Endothelial cell of umbilical vein (primary cell): ENCODE measurements at regions of chr1 and their contacts with region 1.

Region 1: GRCh38 chr1:156383023-156383422 is 14.0 kb downstream of the RHBG start:
- DNase-seq: peak; percentile 55
- H3K4me3 ChIP-seq: no peak overlapping the region
- H3K27ac ChIP-seq: no peak overlapping the region
- H3K4me1 ChIP-seq: peaks cover 3% of the 10 kb centered on the region
- H3K27me3 ChIP-seq: peaks cover 9 to 11% of the 10 kb centered on the region in 2 experiments
- CTCF ChIP-seq: peak; percentile 79 to 94
- POLR2A ChIP-seq: no peak

Region 2: GRCh38 chr1:156076501-156077429 is 306.3 kb before region 1 on chr1:
- CTCF ChIA-PET with region 1: no interaction called
- POLR2A ChIA-PET with region 1: no interaction called
- dilution Hi-C with region 1: no loop called
- intact Hi-C with region 1: no loop called
- DNase-seq: no peak
- H3K4me3 ChIP-seq: no peak overlapping the region
- H3K27ac ChIP-seq: no peak overlapping the region
- H3K4me1 ChIP-seq: peaks cover 14% of the 10 kb centered on the region
- H3K27me3 ChIP-seq: no peaks in the 10 kb centered on the region
- CTCF ChIP-seq: no peak
- POLR2A ChIP-seq: no peak

Region 3: DNA sequence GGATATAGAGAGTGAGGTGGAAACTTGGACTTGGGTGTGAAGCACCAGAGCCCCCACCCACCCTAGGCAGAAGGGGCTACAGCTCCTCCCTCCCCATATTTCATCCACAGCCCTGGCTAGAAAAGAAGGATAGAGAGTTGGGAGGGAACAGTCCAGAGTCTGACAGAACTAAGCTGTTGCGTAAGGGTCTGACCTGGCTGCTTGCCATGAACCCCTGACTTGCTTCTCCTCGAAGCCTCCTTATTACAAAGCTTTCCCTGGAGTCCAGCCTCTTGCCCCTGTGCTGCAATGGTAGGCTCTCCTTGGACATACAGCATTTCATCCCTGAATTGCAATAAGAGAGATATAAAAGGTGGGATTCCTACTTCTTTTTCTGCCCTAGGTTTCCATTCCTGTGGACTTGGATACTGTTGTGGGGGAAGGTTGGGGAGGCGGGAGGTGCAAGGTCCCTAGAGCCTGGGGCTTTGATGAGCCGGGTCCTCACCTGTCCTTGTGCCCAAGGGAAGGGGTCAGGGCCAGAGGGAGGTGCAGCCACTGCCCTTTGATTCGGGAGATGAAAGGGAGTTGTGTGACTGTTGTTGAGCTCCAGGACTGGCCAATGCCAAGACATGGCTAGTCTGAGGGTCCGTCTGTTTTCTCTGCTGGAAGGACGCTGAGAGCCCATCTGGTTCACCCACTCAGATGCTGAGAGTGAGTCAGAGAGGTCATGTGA is 11.3 kb before region 1 on chr1:
- CTCF ChIA-PET with region 1: interaction called, 96 read pairs
- POLR2A ChIA-PET with region 1: no interaction called
- dilution Hi-C with region 1: no loop called
- intact Hi-C with region 1: no loop called
- DNase-seq: no peak
- H3K4me3 ChIP-seq: no peak overlapping the region
- H3K27ac ChIP-seq: no peak overlapping the region
- H3K4me1 ChIP-seq: peaks cover 6% of the 10 kb centered on the region
- H3K27me3 ChIP-seq: peaks cover 23 to 34% of the 10 kb centered on the region in 2 experiments
- CTCF ChIP-seq: no peak
- POLR2A ChIP-seq: no peak

Region 4: DNA sequence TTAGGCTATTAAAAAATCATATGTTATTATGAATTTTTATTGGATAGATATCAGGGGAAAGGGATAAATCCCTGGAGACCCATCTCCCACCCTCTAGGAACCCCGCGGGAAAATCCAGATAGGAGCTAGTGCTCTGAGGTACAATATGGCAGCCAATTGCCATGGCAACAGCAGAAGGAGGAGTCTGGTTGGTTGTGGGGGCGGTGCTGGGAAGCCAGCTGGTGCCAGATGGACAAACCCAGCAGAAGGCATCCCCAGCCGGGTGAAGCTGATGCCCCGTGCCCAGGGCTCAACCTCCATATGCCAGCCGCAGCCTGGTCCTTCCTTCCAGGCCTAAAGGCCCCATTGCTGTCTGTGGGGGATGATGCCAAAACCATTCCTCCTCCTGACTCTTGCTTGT is 24.3 kb after region 1 on chr1:
- CTCF ChIA-PET with region 1: interaction called, 78 read pairs
- POLR2A ChIA-PET with region 1: no interaction called
- dilution Hi-C with region 1: no loop called
- intact Hi-C with region 1: no loop called
- DNase-seq: no peak
- H3K4me3 ChIP-seq: no peak overlapping the region
- H3K27ac ChIP-seq: no peak overlapping the region
- H3K4me1 ChIP-seq: no peaks in the 10 kb centered on the region
- H3K27me3 ChIP-seq: peaks cover 19 to 34% of the 10 kb centered on the region in 2 experiments
- CTCF ChIP-seq: no peak
- POLR2A ChIP-seq: no peak

Region 5: DNA sequence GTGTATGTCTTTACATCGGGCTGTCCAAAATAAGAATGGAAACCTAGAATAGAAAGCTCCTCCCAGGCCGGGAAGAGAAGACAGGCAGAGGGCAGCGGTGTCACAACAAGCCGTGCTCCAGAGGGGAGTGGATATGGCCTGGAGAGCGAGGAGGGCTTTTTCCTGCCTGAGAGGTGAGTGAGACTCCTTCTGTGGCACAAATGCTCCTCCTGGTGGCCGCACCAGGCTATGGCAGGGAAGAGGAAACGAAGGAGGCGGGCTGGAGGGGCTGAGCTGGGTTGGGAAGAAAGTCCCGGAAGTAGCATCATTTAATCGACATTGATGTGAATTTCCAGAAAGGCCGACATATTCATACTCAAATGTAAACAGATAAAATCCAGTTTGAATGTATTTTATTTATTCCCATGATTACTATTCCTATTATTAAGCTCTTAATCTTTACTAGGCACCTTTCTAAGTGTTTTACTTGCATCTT is 62.8 kb after region 1 on chr1:
- CTCF ChIA-PET with region 1: interaction called, 648 read pairs
- POLR2A ChIA-PET with region 1: interaction called, 4 read pairs
- dilution Hi-C with region 1: no loop called
- intact Hi-C with region 1: loop called (anchors 1 kb)
- DNase-seq: peak; percentile 77
- H3K4me3 ChIP-seq: no peak overlapping the region
- H3K27ac ChIP-seq: no peak overlapping the region
- H3K4me1 ChIP-seq: no peaks in the 10 kb centered on the region
- H3K27me3 ChIP-seq: peaks cover 39 to 46% of the 10 kb centered on the region in 2 experiments
- CTCF ChIP-seq: peak; percentile 89 to 95
- POLR2A ChIP-seq: no peak

Region 6: GRCh38 chr1:156608036-156608674 is 225.1 kb after region 1 on chr1:
- CTCF ChIA-PET with region 1: interaction called, 50 read pairs
- POLR2A ChIA-PET with region 1: no interaction called
- dilution Hi-C with region 1: no loop called
- intact Hi-C with region 1: loop called (anchors 1 kb)
- DNase-seq: peak; percentile 78
- H3K4me3 ChIP-seq: no peak overlapping the region
- H3K27ac ChIP-seq: no peak overlapping the region
- H3K4me1 ChIP-seq: no peaks in the 10 kb centered on the region
- H3K27me3 ChIP-seq: peaks cover 6 to 9% of the 10 kb centered on the region in 2 experiments
- CTCF ChIP-seq: peak; percentile 71 to 78
- POLR2A ChIP-seq: no peak